Lower lobe of right lung (tissue), 2 donors: ENCODE measurements at regions of chr3 and their contacts with region 1.

Region 1: GRCh38 chr3:134212906-134213665 is 37.6 kb downstream of the RYK start:
- DNase-seq: peak; percentile 76
- ATAC-seq: peak; percentile 91
- H3K4me3 ChIP-seq: no peak overlapping the region
- H3K27ac ChIP-seq: no peak overlapping the region
- H3K4me1 ChIP-seq: no peaks in the 10 kb centered on the region
- H3K27me3 ChIP-seq: no peaks in the 10 kb centered on the region
- CTCF ChIP-seq: peak; percentile 95

Region 2: DNA sequence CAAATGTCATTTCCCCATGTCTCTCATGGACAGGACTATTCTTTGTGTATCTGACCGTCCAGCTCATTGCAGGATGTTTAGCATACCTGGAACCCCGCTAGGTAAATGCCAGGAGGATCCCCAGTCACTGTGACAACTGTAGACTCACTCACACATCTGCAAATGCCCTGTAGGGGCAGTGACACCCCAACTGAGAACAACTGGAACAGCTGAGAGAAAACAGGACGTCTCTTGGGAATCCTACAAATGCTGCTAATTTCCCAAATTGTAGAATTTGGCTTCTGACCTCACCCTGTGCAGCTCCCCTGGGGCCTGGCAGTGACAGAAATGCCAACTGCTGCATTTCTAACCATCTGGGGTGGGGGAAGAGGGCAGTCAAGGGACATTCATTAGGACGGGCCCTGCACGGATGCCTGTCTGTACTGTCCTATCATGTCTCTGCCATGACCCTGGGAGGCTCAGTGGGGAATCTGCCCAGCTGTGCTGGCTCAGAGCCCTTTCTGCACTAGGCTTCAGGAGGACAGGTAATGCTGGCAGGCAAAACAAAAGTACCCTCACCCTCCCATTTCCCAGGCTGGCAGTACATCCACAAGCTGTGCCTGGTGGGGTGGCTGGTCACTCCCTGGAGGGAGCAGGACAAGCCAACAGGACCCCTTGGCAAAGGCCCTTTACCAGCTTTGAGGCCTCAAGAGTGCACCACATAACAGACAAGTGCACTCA is 347.8 kb before region 1 on chr3:
- intact Hi-C with region 1: no loop called
- DNase-seq: no peak
- ATAC-seq: no peak
- H3K4me3 ChIP-seq: no peak overlapping the region
- H3K27ac ChIP-seq: no peak overlapping the region
- H3K4me1 ChIP-seq: no peaks in the 10 kb centered on the region
- H3K27me3 ChIP-seq: no peaks in the 10 kb centered on the region
- CTCF ChIP-seq: no peak

Region 3: GRCh38 chr3:134299185-134299887 is 86.2 kb after region 1 on chr3:
- intact Hi-C with region 1: loop called (anchors 10 kb)
- DNase-seq: no peak
- ATAC-seq: peak in 1 of 2 donors; percentile 48
- H3K4me3 ChIP-seq: no peak overlapping the region
- H3K27ac ChIP-seq: no peak overlapping the region
- H3K4me1 ChIP-seq: no peaks in the 10 kb centered on the region
- H3K27me3 ChIP-seq: no peaks in the 10 kb centered on the region
- CTCF ChIP-seq: no peak

Region 4: DNA sequence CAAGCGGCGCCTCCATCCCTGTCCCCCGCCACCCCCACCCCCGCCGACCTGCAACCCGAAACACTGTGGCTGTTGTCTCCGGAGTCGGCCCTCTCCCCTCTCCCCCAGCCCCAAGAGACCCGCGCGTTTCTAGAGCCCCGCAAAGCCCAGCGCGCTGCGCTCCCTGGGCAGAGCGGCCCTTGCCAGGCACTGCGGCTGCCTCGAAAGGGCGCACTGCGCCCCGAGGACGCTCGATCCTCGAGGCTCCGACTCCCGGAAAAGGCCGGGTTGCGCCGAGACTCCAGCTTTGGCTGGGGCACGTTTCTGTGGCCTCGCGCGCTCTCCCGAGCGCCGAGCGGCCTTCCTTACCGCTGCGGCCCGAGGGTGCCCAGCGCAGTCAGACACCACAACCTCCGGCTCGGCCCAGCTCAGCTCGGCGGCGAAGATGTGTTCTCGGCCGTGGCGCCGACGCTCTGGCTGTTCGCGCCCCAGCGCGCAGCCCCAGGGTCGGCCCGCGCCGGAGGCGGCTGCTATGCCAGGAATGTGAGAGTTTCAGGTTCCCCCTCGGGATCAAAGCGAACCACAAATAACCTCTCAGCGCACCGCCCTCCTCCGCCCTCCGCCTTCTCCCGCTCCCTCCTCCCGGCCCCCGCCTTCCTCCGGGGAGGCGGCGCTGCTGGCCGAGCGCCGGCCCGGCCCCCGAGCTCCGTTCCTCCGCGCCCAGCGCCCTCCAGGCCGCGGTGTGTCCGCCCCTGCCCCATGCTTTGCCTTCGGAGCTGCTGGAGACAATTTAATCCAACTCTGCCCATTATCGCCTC is 161.1 kb after region 1 on chr3 and contains the start of gene AMOTL2:
- intact Hi-C with region 1: no loop called
- DNase-seq: peak; percentile 91
- ATAC-seq: peak; percentile 89 to 90
- H3K4me3 ChIP-seq: peak within 1 kb of the TSS; percentile 80
- H3K27ac ChIP-seq: peak within 1 kb of the TSS; percentile 100
- H3K4me1 ChIP-seq: peaks cover 58% of the 10 kb centered on the region
- H3K27me3 ChIP-seq: no peaks in the 10 kb centered on the region
- CTCF ChIP-seq: no peak
- total RNA-seq, gene AMOTL2: 77.8 TPM

Region 5: DNA sequence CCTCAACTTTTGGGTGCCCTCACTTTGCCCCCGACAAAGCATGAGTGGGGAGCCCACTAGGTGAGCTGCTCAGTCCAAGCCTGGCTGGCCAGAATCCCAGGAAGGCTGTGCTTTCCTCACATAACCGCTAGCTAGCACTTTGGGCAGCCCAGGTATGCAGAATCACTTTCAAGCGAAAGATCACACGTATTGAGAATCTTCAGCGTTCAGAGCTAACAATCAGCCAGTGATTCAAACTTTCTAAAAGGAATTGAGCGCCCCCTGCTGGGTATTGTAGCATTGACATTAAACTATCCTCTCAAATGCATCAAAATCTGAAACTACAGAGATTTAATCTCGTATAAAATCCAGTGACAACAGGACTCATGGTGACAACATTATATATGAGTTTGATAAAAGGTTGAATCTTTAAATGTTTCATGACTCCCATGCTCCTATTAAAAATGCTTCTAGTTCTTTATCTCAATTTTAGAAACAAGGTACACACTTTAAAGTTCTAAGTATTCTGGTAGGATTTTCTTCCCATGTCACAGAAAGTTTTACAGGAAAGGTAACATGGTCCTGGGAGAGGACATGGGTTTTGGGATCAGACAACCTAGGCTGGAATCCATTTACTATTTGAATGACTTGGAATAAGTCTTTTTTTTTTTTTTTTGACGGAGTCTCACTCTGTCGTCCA is 260.9 kb after region 1 on chr3:
- intact Hi-C with region 1: loop called (anchors 10 kb)
- DNase-seq: no peak
- ATAC-seq: peak; percentile 74 to 78
- H3K4me3 ChIP-seq: no peak overlapping the region
- H3K27ac ChIP-seq: no peak overlapping the region
- H3K4me1 ChIP-seq: peaks cover 32% of the 10 kb centered on the region
- H3K27me3 ChIP-seq: no peaks in the 10 kb centered on the region
- CTCF ChIP-seq: peak; percentile 81